Activated CD4-positive, alpha-beta memory T cell treated with anti-CD3 and anti-CD28 coated beads for 36 hours (primary cell): ENCODE measurements at regions of chr14 and their contacts with region 1.

Region 1: DNA sequence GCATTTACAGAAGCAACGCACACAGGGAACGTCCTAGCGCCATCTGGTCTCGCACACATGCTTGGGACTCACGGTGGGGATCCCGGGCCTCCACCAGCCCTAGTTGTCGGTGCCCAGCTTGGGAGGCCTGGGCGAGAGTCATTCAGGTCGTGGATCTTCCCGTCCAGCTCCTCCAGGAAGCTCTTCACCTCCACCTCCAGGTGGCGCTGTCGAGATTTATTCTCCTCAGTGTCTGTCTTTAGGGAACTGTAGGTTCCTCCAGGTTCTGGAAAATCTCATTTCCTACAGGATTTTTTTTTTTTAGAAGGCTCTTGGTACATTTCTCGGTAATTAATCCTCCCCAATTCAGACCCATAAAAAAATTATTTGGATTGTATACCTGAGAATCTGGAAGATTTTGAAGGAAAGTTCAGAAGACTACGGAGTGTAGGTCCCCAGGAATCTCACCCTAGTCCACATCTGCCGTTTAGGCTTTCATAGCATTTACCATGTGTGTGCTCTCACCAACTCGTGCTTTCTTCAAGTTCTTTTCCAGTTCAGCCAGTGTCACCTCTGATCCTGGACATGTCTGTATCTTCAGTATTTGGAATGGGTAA is 910.0 kb downstream of the TMEM121 start:
- DNase-seq: peak; percentile 65
- H3K4me3 Mint-ChIP-seq: no peak overlapping the region
- H3K27ac Mint-ChIP-seq: no peak overlapping the region
- H3K4me1 Mint-ChIP-seq: no peaks in the 10 kb centered on the region
- H3K27me3 Mint-ChIP-seq: peaks cover 30% of the 10 kb centered on the region

Region 2: GRCh38 chr14:106518054-106518943 is 81.9 kb after region 1 on chr14:
- CTCF ChIA-PET with region 1: interaction called, 30 read pairs
- POLR2A ChIA-PET with region 1: no interaction called
- intact Hi-C with region 1: loop called (anchors 1 kb)
- DNase-seq: peak; percentile 89
- H3K4me3 Mint-ChIP-seq: no peak overlapping the region
- H3K27ac Mint-ChIP-seq: no peak overlapping the region
- H3K4me1 Mint-ChIP-seq: peaks cover 15% of the 10 kb centered on the region
- H3K27me3 Mint-ChIP-seq: peaks cover 10% of the 10 kb centered on the region